ENCODE measurements at regions of chr7 and their contacts with region 1.

Region 1: GRCh38 chr7:54773472-54774399 is 14.7 kb upstream of the SEC61G start:
- DNase-seq: peak; percentile 88 to 89
- H3K4me3 ChIP-seq: peak overlapping the region; percentile 28
- H3K4me3 Mint-ChIP-seq: peak overlapping the region; percentile 70
- H3K27ac Mint-ChIP-seq: peak overlapping the region; percentile 77
- H3K4me1 ChIP-seq: no peaks in the 10 kb centered on the region
- H3K4me1 Mint-ChIP-seq: no peaks in the 10 kb centered on the region
- H3K27me3 ChIP-seq: no peaks in the 10 kb centered on the region
- H3K27me3 Mint-ChIP-seq: peaks cover 18% of the 10 kb centered on the region
- CTCF ChIP-seq: peak; percentile 80 to 92

Region 2: GRCh38 chr7:54729107-54729506 is 44.6 kb before region 1 on chr7:
- CTCF ChIA-PET with region 1: no interaction called
- POLR2A ChIA-PET with region 1: no interaction called
- intact Hi-C with region 1: no loop called
- DNase-seq: no peak
- H3K4me3 ChIP-seq: no peak overlapping the region
- H3K4me3 Mint-ChIP-seq: no peak overlapping the region
- H3K27ac Mint-ChIP-seq: no peak overlapping the region
- H3K4me1 ChIP-seq: no peaks in the 10 kb centered on the region
- H3K4me1 Mint-ChIP-seq: no peaks in the 10 kb centered on the region
- H3K27me3 ChIP-seq: no peaks in the 10 kb centered on the region
- H3K27me3 Mint-ChIP-seq: peaks cover 4% of the 10 kb centered on the region
- CTCF ChIP-seq: no peak

Region 3: GRCh38 chr7:54788664-54789063 is 14.9 kb after region 1 on chr7:
- CTCF ChIA-PET with region 1: no interaction called
- POLR2A ChIA-PET with region 1: no interaction called
- intact Hi-C with region 1: loop called (anchors 1 kb)
- DNase-seq: peak; percentile 67 to 81
- H3K4me3 ChIP-seq: no peak overlapping the region
- H3K4me3 Mint-ChIP-seq: peak overlapping the region; percentile 44
- H3K27ac Mint-ChIP-seq: no peak overlapping the region
- H3K4me1 ChIP-seq: 0 out of 2 replicates have a peak, but pooled peaks cover 4% of the 10 kb centered on the region
- H3K4me1 Mint-ChIP-seq: peaks cover 9% of the 10 kb centered on the region
- H3K27me3 ChIP-seq: no peaks in the 10 kb centered on the region
- H3K27me3 Mint-ChIP-seq: no peaks in the 10 kb centered on the region
- CTCF ChIP-seq: peak; percentile 50 to 69

Region 4: DNA sequence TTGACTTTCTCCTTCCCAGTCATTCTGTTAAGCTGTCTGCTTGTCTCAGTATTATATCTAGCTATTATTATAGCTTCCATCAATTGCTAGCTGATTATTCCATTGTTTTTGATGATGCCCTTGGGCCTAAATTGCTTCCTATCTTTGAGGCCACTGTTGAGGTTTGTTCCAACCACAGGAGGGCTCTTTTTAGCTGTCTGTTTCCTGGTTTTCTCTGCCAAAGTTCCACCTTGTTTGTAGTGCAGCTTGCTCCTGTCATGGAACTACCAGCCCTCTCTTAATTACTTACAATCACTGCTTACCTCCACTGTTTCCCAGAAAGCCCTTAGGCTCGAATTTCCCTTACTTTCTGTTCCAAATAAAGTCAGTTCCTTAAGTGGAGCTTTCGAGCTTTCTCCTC is 103.9 kb after region 1 on chr7:
- CTCF ChIA-PET with region 1: no interaction called
- POLR2A ChIA-PET with region 1: no interaction called
- intact Hi-C with region 1: loop called (anchors 1 kb)
- DNase-seq: peak in 1 of 2 experiments; percentile 36
- H3K4me3 ChIP-seq: no peak overlapping the region
- H3K4me3 Mint-ChIP-seq: no peak overlapping the region
- H3K27ac Mint-ChIP-seq: peak overlapping the region; percentile 8
- H3K4me1 ChIP-seq: peaks cover 44% of the 10 kb centered on the region
- H3K4me1 Mint-ChIP-seq: peaks cover 30% of the 10 kb centered on the region
- H3K27me3 ChIP-seq: no peaks in the 10 kb centered on the region
- H3K27me3 Mint-ChIP-seq: no peaks in the 10 kb centered on the region
- CTCF ChIP-seq: peak in 1 of 2 experiments; percentile 37

Region 5: DNA sequence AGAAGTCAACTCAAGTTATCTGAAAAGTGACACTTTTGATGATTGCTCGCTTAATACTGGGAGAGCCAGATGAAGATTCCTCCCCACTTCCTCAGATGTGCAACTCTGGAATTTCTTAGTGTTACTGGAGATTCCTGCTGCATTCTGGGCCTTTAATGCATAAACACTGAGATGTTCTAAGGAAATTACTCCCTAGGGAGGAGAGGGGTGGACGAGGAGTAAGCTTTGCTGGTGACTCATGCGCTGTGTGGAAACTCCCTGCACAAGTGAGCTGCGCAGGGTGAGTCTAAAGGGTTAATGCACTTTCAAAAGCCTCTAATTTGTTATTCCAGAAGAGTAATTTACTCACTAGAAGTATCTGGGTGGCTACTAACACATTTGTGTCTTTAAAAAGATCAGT is 291.3 kb after region 1 on chr7:
- CTCF ChIA-PET with region 1: no interaction called
- POLR2A ChIA-PET with region 1: no interaction called
- intact Hi-C with region 1: loop called (anchors 5 kb)
- DNase-seq: peak in 1 of 2 experiments; percentile 47
- H3K4me3 ChIP-seq: no peak overlapping the region
- H3K4me3 Mint-ChIP-seq: no peak overlapping the region
- H3K27ac Mint-ChIP-seq: peak overlapping the region; percentile 95
- H3K4me1 ChIP-seq: peaks cover 66% of the 10 kb centered on the region
- H3K4me1 Mint-ChIP-seq: peaks cover 46% of the 10 kb centered on the region
- H3K27me3 ChIP-seq: no peaks in the 10 kb centered on the region
- H3K27me3 Mint-ChIP-seq: no peaks in the 10 kb centered on the region
- CTCF ChIP-seq: no peak

Region 6: DNA sequence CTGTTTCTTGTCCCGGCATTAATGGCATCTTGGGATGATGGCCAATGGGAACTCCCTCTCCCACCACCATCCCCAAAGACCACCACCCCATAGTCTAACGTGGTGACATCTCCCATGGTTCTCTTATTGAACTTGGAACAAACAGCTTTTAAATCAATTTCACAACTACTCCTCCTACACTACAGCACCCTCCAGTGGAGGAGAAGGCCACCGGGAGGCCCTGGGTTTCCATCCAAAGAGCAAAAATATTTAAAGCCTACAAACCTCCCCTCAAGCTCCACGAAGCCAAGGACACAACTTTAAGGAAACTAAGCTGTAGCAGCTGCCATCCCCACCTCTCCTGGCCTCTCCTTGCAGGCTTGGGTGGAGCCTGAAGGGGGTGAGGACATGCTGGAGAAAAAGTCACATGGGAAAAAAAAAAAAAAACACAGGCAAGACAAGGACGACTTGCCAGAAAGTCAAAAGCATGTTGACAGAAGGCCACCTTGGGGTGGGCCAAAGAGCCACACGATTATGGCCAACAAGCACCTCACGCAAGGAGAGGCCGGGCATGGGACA is 497.4 kb after region 1 on chr7:
- CTCF ChIA-PET with region 1: no interaction called
- POLR2A ChIA-PET with region 1: no interaction called
- intact Hi-C with region 1: loop called (anchors 1 kb)
- DNase-seq: no peak
- H3K4me3 ChIP-seq: no peak overlapping the region
- H3K4me3 Mint-ChIP-seq: no peak overlapping the region
- H3K27ac Mint-ChIP-seq: no peak overlapping the region
- H3K4me1 ChIP-seq: no peaks in the 10 kb centered on the region
- H3K4me1 Mint-ChIP-seq: no peaks in the 10 kb centered on the region
- H3K27me3 ChIP-seq: no peaks in the 10 kb centered on the region
- H3K27me3 Mint-ChIP-seq: peaks cover 11% of the 10 kb centered on the region
- CTCF ChIP-seq: peak; percentile 32 to 44

Region 7: DNA sequence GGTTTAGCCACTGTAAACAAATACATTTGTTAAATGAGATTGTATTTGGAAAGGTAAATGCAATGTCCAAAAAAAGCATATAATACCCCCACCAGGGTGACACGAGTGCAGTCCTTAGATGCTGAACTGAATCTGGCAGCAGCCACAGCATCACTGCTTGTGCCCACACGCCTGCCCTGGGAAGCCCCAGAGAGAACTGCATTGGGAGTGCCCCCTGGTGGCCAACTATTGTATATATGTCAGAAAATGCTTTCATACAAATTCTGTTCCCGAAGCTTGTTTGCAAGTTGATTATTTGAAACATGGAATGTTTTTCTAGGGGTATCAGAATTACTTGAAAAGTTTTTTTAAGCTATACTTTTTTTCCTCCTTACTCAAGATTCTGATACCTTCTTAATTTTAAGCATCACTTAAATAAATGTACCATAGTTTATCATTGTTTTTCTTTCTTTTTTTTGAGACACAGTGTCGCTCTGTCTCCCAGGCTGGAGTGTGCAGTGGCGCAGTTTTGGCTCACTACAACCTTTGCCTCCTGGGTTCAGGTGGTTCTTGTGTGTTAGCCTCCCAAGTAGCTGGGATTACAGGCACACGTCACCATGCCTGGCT is 641.5 kb after region 1 on chr7:
- CTCF ChIA-PET with region 1: no interaction called
- POLR2A ChIA-PET with region 1: no interaction called
- intact Hi-C with region 1: loop called (anchors 1 kb)
- DNase-seq: peak; percentile 80 to 89
- H3K4me3 ChIP-seq: no peak overlapping the region
- H3K4me3 Mint-ChIP-seq: no peak overlapping the region
- H3K27ac Mint-ChIP-seq: no peak overlapping the region
- H3K4me1 ChIP-seq: peaks cover 2% of the 10 kb centered on the region; the same call in 1 of the 2 replicates
- H3K4me1 Mint-ChIP-seq: no peaks in the 10 kb centered on the region
- H3K27me3 ChIP-seq: no peaks in the 10 kb centered on the region
- H3K27me3 Mint-ChIP-seq: no peaks in the 10 kb centered on the region
- CTCF ChIP-seq: peak; percentile 85 to 88

Measured in Caco-2 (cell line).